Activated CD4-positive, alpha-beta T cell treated with anti-CD3 and anti-CD28 coated beads, Interleukin-2, amount 10 ng/mL, durations not matched to agents 24 days and 14 days (primary cell): ENCODE measurements at regions of chr9 and their contacts with region 1.

Region 1: DNA sequence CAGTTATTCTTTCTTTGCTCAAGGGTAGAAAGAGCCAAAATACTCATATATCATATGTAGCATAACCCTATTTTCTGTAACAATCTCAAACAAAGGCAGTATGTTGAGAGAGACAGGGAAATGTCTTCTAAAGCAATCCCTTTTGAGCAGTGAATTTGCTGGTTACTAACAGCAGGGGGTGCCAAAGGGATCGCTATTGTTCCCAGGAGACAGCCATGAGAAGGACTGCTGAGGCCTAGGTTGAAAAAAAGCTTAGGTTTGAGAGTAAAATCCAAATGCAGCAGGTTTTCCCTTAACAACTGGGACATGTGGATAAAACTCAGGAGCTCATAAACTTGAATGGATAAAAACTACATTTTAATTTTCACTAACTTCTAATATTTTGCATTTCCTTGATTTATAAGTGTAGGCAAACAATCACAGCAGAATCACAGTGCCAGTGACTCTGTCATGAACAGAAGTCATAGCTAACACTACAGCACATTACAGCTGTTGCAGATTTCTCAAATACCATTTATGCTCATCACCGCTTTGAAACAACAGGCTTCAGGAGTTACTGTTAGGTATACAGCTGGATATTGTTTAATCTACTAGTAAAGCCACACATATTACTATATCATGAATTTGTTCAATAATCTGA is 148.4 kb downstream of the MAPKAP1 start:
- DNase-seq: peak; percentile 86
- H3K4me3 Mint-ChIP-seq: no peak overlapping the region
- H3K27ac Mint-ChIP-seq: no peak overlapping the region
- H3K4me1 Mint-ChIP-seq: peaks cover 19% of the 10 kb centered on the region
- H3K27me3 Mint-ChIP-seq: no peaks in the 10 kb centered on the region

Region 2: GRCh38 chr9:125767349-125767748 is 208.8 kb after region 1 on chr9:
- intact Hi-C with region 1: no loop called
- DNase-seq: no peak
- H3K4me3 Mint-ChIP-seq: no peak overlapping the region
- H3K27ac Mint-ChIP-seq: no peak overlapping the region
- H3K4me1 Mint-ChIP-seq: peaks cover 7% of the 10 kb centered on the region
- H3K27me3 Mint-ChIP-seq: no peaks in the 10 kb centered on the region

Region 3: DNA sequence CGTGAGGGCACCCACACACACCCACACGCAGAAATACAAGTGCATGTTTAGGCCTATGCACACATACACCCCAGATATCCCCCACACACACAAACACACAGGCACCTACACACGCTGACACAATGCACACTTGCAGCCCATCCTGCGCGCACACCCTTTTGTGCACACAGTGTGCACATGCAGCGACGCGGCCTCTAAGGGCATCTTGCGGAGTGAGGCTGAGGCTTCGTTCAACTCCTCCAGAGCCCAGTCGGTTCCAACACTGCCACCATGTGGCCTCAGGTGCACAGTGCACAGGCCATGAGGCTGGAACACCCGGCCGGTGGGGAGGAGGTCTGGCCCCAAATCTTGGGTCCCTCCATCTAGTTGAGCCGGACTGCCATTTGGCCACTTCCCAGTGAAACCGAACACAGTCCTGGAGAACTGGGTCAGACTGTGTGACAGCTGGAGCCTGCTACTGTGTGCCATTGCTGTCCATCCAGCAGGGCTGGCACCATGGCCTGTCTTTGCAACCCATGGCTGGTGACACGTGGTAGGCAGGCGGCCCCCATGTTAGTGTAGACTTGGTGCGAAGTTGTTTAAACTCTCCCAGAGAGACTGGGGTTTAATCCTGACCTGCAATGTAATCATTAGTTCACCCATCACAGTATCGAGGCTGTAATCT is 670.3 kb after region 1 on chr9:
- intact Hi-C with region 1: loop called (anchors 2 kb)
- DNase-seq: peak; percentile 90
- H3K4me3 Mint-ChIP-seq: no peak overlapping the region
- H3K27ac Mint-ChIP-seq: no peak overlapping the region
- H3K4me1 Mint-ChIP-seq: peaks cover 3% of the 10 kb centered on the region
- H3K27me3 Mint-ChIP-seq: peaks cover 24% of the 10 kb centered on the region